ENCODE measurements at regions of chr6 and their contacts with region 1.

Region 1: DNA sequence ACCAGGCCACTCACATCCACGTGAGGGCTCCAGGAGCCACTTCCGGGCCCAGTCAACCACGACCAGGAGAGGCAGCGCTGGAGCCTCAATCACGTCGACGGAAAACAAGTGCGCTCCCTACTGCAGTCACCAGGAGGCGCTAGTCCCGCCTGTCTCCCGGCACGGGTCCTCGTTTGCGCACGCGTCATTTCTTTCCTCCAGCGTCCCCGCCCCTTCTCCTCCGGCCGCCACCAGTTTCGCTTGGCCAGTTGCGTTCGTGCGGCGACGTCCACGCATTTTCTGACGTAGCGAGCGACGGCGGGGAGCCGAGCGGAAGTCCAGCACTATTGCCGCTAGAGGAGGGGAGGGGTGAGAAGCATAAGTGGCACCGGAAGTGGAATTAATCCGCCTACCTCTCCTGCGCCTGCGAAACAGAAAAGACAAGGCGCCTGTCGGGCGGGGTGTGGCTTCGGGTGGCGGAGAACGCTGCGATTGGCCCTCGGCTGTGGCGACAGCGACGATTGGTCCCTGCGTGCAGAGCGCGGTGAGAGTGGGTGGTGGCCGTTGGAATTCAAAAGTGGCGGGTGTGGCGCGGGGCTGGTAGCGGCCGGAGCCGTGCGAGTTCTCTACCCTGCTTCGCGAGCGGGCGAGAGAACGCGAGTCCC is at the start of gene KIFC1:
- DNase-seq: peak; percentile 100
- H3K4me3 ChIP-seq: peak within 1 kb of the TSS; percentile 30 to 56 (median 50)
- H3K27ac ChIP-seq: peak within 1 kb of the TSS; percentile 86 to 95 (median 92)
- H3K4me1 ChIP-seq: peaks cover 0 to 14% (median 12%) of the 10 kb centered on the region in 4 donors
- H3K27me3 ChIP-seq: no peaks in the 10 kb centered on the region
- CTCF ChIP-seq: peak; percentile 92 to 99 (median 96)
- EP300 ChIP-seq: peak in 2 of 4 donors; percentile 49 to 96
- POLR2A ChIP-seq: no peak
- total RNA-seq, gene KIFC1: 0.49 to 5.5 (median 1.3) TPM

Region 2: GRCh38 chr6:33271458-33272274 is 119.7 kb before region 1 on chr6 and contains the starts of genes RPS18 and VPS52:
- intact Hi-C with region 1: loop called (anchors 5 kb)
- DNase-seq: peak; percentile 99
- H3K4me3 ChIP-seq: peak within 1 kb of the TSS; percentile 56 to 88 (median 72)
- H3K27ac ChIP-seq: peak within 1 kb of the TSS; percentile 89 to 96 (median 90)
- H3K4me1 ChIP-seq: peaks cover 0 to 61% (median 57%) of the 10 kb centered on the region in 4 donors
- H3K27me3 ChIP-seq: no peaks in the 10 kb centered on the region
- CTCF ChIP-seq: no peak
- EP300 ChIP-seq: peak in 1 of 4 donors; percentile 11
- POLR2A ChIP-seq: peak; percentile 96 to 98
- total RNA-seq, gene RPS18: 2,427 to 4,810 (median 4,005) TPM
- total RNA-seq, gene VPS52: 26.2 to 44.6 (median 33.5) TPM

Region 3: DNA sequence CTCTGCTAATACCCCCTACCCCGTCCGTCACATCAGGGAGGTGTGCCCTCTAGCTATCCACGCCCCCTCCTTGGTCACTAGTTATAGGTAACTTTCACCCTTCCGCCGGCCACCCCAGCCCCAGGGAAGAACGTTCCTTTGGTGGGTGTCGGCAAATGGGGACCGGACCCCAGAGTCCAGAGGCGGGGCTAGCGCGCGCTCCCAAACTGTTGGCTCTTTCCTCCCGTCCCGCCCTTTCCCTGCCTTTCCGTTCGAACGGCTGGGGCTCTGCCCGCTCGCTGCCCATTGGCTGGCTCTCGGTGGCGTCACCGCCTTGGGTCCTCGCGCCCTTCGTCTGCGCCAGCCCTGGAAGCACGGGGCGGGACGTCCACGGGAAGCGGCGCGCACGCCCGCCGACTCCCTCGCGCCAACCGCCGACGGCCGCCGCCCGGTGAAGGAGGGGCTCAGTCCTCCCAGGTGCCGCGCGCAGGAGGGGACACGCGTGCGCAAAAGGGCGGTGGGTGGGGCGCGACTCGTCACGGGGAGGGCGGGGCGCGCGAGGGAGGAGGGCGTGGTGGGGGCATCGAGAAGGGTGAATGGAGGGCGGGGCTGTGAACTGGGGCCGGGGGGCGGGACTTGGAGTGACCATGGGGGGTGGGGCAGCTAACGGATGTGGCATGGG is 18.8 kb after region 1 on chr6:
- intact Hi-C with region 1: loop called (anchors 2 kb)
- DNase-seq: peak; percentile 99
- H3K4me3 ChIP-seq: peak overlapping the region; percentile 86 to 99 (median 90)
- H3K27ac ChIP-seq: peak overlapping the region; percentile 93 to 100 (median 98)
- H3K4me1 ChIP-seq: peaks cover 0 to 38% (median 23%) of the 10 kb centered on the region in 4 donors
- H3K27me3 ChIP-seq: no peaks in the 10 kb centered on the region
- CTCF ChIP-seq: no peak
- EP300 ChIP-seq: peak in 1 of 4 donors; percentile 56
- POLR2A ChIP-seq: peak in 1 of 2 donors; percentile 71

Region 4: GRCh38 chr6:33425668-33426577 is 34.5 kb after region 1 on chr6:
- intact Hi-C with region 1: loop called (anchors 1 kb)
- DNase-seq: peak; percentile 95
- H3K4me3 ChIP-seq: peak overlapping the region; percentile 35 to 64 (median 54)
- H3K27ac ChIP-seq: peak overlapping the region; percentile 87 to 93 (median 91)
- H3K4me1 ChIP-seq: peaks cover 0 to 59% (median 55%) of the 10 kb centered on the region in 4 donors
- H3K27me3 ChIP-seq: no peaks in the 10 kb centered on the region
- CTCF ChIP-seq: peak in 2 of 4 experiments; percentile 44 to 65
- EP300 ChIP-seq: peak in 1 of 4 donors; percentile 46
- POLR2A ChIP-seq: peak in 1 of 2 donors; percentile 26

Region 5: DNA sequence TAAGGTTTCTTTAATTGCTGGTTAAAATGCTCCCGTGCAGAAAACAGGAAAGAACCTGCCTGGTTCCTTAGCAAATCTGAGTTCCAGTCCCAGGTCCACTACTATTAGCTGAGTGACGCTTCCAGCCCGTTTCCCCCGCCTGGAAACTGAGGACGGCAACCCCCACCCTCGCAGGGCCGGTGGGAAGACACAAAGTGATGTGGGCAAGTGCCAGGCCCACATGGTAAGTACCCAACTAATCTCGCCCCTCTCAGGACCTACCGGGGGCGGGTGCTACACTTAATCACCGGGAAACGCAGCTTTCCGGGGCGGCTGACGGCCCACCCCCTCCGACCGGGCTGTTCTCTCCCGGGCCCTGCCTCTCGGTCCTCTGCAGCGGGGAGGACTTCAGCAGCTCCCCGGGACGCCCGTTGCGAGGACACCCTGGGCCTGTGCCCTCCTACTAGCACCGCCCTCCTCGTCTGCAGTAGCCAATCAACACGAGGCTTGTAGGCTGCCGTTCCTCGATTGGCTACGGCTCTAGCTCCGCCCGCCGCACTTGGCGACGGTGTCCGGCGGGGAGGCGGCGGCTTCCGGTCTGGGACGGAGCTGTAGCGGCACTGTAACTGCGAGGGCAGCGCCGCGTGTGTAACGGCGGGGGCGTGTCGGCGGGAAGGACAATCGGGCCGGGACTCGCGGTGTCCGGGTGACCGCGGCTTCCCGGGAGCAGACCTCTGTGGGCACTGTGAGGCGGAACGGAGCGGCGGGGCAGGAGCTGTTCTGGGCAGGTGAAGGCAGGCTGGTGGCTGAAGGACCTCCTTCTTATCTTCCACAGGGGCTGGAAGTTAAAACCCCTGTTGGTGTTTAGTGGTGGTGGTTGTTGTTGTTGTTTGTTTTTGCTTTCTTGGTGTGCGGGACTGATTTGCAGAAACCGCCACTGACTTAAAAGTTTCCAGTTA is 62.9 kb after region 1 on chr6 and contains the start of gene ZBTB9:
- intact Hi-C with region 1: loop called (anchors 2 kb)
- DNase-seq: peak; percentile 99
- H3K4me3 ChIP-seq: peak within 1 kb of the TSS; percentile 71 to 90 (median 76)
- H3K27ac ChIP-seq: peak within 1 kb of the TSS; percentile 81 to 88 (median 86)
- H3K4me1 ChIP-seq: peaks cover 0 to 30% (median 20%) of the 10 kb centered on the region in 4 donors
- H3K27me3 ChIP-seq: no peaks in the 10 kb centered on the region
- CTCF ChIP-seq: no peak
- EP300 ChIP-seq: no peak
- POLR2A ChIP-seq: peak; percentile 70 to 91
- total RNA-seq, gene ZBTB9: 1.1 to 3.6 (median 1.4) TPM

Region 6: GRCh38 chr6:33579828-33580714 is 188.7 kb after region 1 on chr6 and contains the start of gene BAK1:
- intact Hi-C with region 1: loop called (anchors 10 kb)
- DNase-seq: peak; percentile 97
- H3K4me3 ChIP-seq: peak within 1 kb of the TSS; percentile 82 to 92 (median 88)
- H3K27ac ChIP-seq: peak within 1 kb of the TSS; percentile 85 to 87 (median 86)
- H3K4me1 ChIP-seq: peaks cover 0 to 24% (median 21%) of the 10 kb centered on the region in 4 donors
- H3K27me3 ChIP-seq: no peaks in the 10 kb centered on the region
- CTCF ChIP-seq: peak in 3 of 4 experiments; percentile 49 to 52 (median 50)
- EP300 ChIP-seq: no peak
- POLR2A ChIP-seq: peak; percentile 56 to 90
- total RNA-seq, gene BAK1: 8.9 to 11.1 (median 10.4) TPM